ENCODE measurements at regions of chr18 and their contacts with region 1.

Region 1: DNA sequence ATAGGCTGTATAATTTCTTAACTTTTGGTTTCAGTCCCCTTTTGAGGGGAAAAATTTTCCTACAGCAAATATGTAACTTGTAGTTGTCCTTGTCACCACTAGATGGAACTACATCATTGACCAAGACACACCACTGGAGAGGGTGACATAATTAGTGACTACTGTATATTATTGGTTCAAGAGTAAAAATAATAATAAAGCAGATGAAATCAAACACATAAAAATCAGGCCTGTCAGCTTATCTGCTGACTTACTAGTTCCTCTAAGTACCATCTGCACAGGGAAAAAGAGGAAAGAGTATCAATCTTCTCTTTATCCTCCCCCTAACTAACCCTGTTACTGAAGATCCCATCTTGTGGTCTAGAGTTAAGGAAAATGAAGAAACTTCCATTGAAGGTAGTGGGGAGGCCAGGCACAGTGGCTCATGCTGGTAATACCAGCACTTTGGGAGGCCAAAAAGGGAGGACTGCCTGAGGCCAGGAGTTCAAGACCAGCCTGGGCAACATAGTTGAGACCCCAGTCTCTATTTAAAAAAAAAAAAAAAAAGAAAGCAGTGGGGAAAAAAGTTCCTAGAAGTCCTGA is 29.6 kb upstream of the ENOSF1 start:
- DNase-seq: peak in 3 of 14 experiments; percentile 59 to 71 (median 71)
- ATAC-seq: peak; percentile 87
- H3K4me3 ChIP-seq: no peak overlapping the region
- H3K4me3 Mint-ChIP-seq: no peak overlapping the region
- H3K27ac ChIP-seq: no peak overlapping the region
- H3K27ac Mint-ChIP-seq: no peak overlapping the region
- H3K4me1 ChIP-seq: no peaks in the 10 kb centered on the region
- H3K4me1 Mint-ChIP-seq: peaks cover 5% of the 10 kb centered on the region
- H3K27me3 ChIP-seq: no peaks in the 10 kb centered on the region
- H3K27me3 Mint-ChIP-seq: no peaks in the 10 kb centered on the region
- CTCF ChIP-seq: peak; percentile 91

Region 2: DNA sequence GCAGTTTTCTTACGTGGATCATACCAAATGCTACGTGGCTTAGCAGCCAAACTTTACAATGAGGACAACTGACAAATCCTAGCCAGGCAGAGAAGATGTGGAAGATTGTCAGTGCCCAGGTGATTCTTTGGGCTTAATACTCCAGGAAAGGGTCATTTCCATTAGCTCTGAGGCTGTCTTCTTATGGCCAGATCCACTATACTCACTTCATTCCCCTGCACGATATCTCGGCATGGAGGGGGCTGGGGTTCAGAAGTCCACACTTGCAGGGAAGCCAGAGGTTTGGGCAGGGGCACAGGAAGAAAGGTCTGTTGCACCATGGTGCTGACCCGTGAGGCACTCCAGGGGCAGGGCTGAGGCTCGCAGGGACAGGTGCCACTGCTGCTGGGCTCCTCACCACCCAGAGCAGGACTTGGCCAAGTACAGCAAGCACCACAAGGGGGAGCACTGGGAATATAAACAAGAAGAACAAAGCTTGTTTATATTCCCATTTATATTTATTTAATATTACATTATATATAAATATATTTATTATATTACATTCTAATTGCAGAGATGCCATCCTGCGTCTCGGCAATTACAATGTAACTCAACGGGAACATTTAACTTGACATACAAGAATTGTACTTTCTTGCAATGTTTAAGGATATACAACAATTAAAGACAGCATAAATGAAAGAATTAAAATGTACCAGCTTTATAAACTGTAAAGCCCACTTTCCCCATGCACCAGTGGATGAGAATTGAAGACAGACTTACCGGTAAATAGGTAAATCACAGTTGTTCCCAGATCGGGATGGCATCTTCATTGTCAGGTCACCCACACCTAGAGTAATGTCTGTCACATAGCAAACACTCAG is 118.0 kb before region 1 on chr18:
- CTCF ChIA-PET with region 1: no interaction called
- POLR2A ChIA-PET with region 1: no interaction called
- intact Hi-C with region 1: loop called in 1 of 2 experiments (anchors 5 kb)
- DNase-seq: peak; percentile 23 to 74 (median 44)
- ATAC-seq: peak; percentile 73
- H3K4me3 ChIP-seq: no peak overlapping the region
- H3K4me3 Mint-ChIP-seq: no peak overlapping the region
- H3K27ac ChIP-seq: no peak overlapping the region
- H3K27ac Mint-ChIP-seq: no peak overlapping the region
- H3K4me1 ChIP-seq: no peaks in the 10 kb centered on the region
- H3K4me1 Mint-ChIP-seq: no peaks in the 10 kb centered on the region
- H3K27me3 ChIP-seq: peaks cover 0 to 5% of the 10 kb centered on the region in 2 experiments
- H3K27me3 Mint-ChIP-seq: peaks cover 14% of the 10 kb centered on the region
- CTCF ChIP-seq: peak; percentile 70

Region 3: DNA sequence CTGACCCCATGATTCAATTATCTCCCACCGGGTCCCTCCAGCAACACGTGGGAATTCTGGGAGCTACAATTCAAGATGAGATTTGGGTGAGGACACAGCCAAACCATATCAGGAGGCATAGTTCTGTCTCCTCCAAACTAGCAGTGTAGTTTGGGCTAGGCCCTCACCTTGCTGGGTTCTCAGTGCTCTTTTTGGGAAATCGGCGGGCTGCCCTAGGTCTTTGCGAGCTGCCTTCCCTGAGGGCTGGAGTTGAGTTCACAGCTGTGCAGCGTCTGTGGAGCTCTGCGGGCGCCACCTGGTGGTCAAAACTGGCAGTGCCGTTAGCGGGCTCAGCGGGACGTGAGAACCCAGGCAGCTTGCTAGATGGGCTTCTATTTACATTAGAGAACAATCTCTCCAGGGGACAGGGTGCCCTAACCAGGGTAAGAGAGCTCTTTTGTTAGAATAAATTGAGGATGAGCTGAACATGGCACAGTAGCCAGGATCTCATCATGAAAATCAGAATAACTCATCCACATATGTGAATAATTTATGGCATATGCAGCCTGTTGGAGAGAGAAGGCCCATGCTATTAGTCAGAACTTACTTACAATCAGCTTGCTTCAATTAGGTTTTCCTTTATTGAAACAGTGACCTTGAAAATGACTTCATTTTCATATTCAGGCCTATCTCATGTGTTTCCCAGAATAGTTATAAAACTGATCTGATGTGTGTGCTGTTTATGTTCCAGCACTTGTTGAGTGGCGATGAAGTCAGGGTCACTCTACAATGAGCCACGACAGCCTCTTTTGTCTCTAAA is 97.4 kb after region 1 on chr18:
- CTCF ChIA-PET with region 1: interaction called, 28 read pairs
- POLR2A ChIA-PET with region 1: interaction called, 5 read pairs
- intact Hi-C with region 1: loop called (anchors 1 kb)
- DNase-seq: peak; percentile 70 to 94 (median 89)
- ATAC-seq: peak; percentile 97
- H3K4me3 ChIP-seq: no peak overlapping the region
- H3K4me3 Mint-ChIP-seq: no peak overlapping the region
- H3K27ac ChIP-seq: no peak overlapping the region
- H3K27ac Mint-ChIP-seq: no peak overlapping the region
- H3K4me1 ChIP-seq: peaks cover 3% of the 10 kb centered on the region
- H3K4me1 Mint-ChIP-seq: peaks cover 6% of the 10 kb centered on the region
- H3K27me3 ChIP-seq: no peaks in the 10 kb centered on the region
- H3K27me3 Mint-ChIP-seq: no peaks in the 10 kb centered on the region
- CTCF ChIP-seq: peak; percentile 91

Region 4: GRCh38 chr18:961644-962355 is 219.8 kb after region 1 on chr18:
- CTCF ChIA-PET with region 1: no interaction called
- POLR2A ChIA-PET with region 1: no interaction called
- intact Hi-C with region 1: loop called in 1 of 2 experiments (anchors 10 kb)
- DNase-seq: peak; percentile 4 to 56 (median 26)
- ATAC-seq: no peak
- H3K4me3 ChIP-seq: no peak overlapping the region
- H3K4me3 Mint-ChIP-seq: no peak overlapping the region
- H3K27ac ChIP-seq: no peak overlapping the region
- H3K27ac Mint-ChIP-seq: no peak overlapping the region
- H3K4me1 ChIP-seq: peaks cover 3% of the 10 kb centered on the region
- H3K4me1 Mint-ChIP-seq: peaks cover 7% of the 10 kb centered on the region
- H3K27me3 ChIP-seq: peaks cover 8 to 19% of the 10 kb centered on the region in 2 experiments
- H3K27me3 Mint-ChIP-seq: peaks cover 53% of the 10 kb centered on the region
- CTCF ChIP-seq: peak; percentile 90